Activated T-helper 1 cell treated with anti-CD3 and anti-CD28 coated beads, Interleukin-12 subunit alpha, Interleukin-12 subunit beta, Interleukin-2, Interleukin-4 antibody, amounts not matched to agents 30 ng/mL and 10 ng/mL and 1 ng/mL, durations not matched to agents 14 hours and 24 hours and 36 hours (primary cell): ENCODE measurements at regions of chrX and their contacts with region 1.

Region 1: GRCh38 chrX:16882702-16883486 is 12.7 kb upstream of the RBBP7 start:
- DNase-seq: peak; percentile 31
- H3K4me3 Mint-ChIP-seq: peak overlapping the region; percentile 75
- H3K27ac Mint-ChIP-seq: no peak overlapping the region
- H3K4me1 Mint-ChIP-seq: peaks cover 6% of the 10 kb centered on the region
- H3K27me3 Mint-ChIP-seq: peaks cover 18% of the 10 kb centered on the region

Region 2: GRCh38 chrX:16843208-16843909 is 39.5 kb before region 1 on chrX:
- intact Hi-C with region 1: no loop called
- DNase-seq: no peak
- H3K4me3 Mint-ChIP-seq: no peak overlapping the region
- H3K27ac Mint-ChIP-seq: peak overlapping the region; percentile 7
- H3K4me1 Mint-ChIP-seq: no peaks in the 10 kb centered on the region
- H3K27me3 Mint-ChIP-seq: no peaks in the 10 kb centered on the region

Region 3: DNA sequence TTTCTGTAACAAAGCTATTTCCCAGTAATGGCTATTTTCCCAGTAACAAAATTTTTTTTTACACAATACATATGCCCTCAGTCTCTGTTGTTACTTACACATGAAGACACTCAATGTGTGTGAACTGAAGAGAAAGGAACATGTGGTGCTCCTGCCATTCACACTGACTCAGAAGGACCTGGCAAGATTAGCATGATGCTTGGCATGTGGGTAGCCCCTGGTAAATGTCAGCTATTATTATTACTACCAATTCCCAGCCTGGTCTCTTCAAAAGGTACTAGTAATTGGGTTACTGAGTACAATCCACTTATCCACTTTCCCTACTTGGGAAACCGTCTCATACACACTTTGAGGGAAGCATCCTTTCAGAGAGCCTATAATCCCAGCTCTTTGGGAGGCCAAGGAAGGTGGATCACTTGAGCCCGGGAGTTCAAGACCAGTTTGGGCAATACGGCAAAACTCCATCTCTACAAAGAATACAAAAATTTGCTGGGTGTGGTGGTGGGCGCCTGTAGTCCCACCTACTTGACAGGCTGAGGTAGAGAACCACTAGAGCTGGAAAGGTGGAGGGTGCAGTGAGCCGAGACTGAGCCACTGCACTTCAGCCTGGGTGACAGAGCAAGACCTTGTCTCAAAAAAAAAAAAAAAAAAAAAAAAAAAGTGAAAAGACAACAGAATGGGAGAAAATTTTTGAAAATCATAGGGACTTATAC is 27.4 kb before region 1 on chrX:
- intact Hi-C with region 1: no loop called
- DNase-seq: no peak
- H3K4me3 Mint-ChIP-seq: no peak overlapping the region
- H3K27ac Mint-ChIP-seq: peak overlapping the region; percentile 79
- H3K4me1 Mint-ChIP-seq: peaks cover 32% of the 10 kb centered on the region
- H3K27me3 Mint-ChIP-seq: no peaks in the 10 kb centered on the region

Region 4: GRCh38 chrX:17046478-17047097 is 163.7 kb after region 1 on chrX:
- intact Hi-C with region 1: loop called (anchors 1 kb)
- DNase-seq: no peak
- H3K4me3 Mint-ChIP-seq: no peak overlapping the region
- H3K27ac Mint-ChIP-seq: no peak overlapping the region
- H3K4me1 Mint-ChIP-seq: no peaks in the 10 kb centered on the region
- H3K27me3 Mint-ChIP-seq: peaks cover 1% of the 10 kb centered on the region